Thyroid gland (tissue), 4 donors: ENCODE measurements at regions of chr2 and their contacts with region 1.

Region 1: GRCh38 chr2:212686285-212686895 is 147.8 kb upstream of the ERBB4 start:
- DNase-seq: peak; percentile 74 to 78
- H3K4me3 ChIP-seq: no peak overlapping the region
- H3K27ac ChIP-seq: peak overlapping the region in 1 of 3 donors; percentile 9
- H3K4me1 ChIP-seq: peaks cover 6 to 12% of the 10 kb centered on the region in 2 donors
- H3K27me3 ChIP-seq: no peaks in the 10 kb centered on the region
- CTCF ChIP-seq: peak; percentile 73 to 95 (median 90)
- POLR2A ChIP-seq: no peak

Region 2: GRCh38 chr2:212528106-212528856 is 158.1 kb before region 1 on chr2:
- intact Hi-C with region 1: no loop called
- DNase-seq: peak in 1 of 2 donors; percentile 1
- H3K4me3 ChIP-seq: no peak overlapping the region
- H3K27ac ChIP-seq: no peak overlapping the region
- H3K4me1 ChIP-seq: no peaks in the 10 kb centered on the region
- H3K27me3 ChIP-seq: no peaks in the 10 kb centered on the region
- CTCF ChIP-seq: peak in 2 of 6 experiments; percentile 13 to 20
- POLR2A ChIP-seq: no peak

Region 3: DNA sequence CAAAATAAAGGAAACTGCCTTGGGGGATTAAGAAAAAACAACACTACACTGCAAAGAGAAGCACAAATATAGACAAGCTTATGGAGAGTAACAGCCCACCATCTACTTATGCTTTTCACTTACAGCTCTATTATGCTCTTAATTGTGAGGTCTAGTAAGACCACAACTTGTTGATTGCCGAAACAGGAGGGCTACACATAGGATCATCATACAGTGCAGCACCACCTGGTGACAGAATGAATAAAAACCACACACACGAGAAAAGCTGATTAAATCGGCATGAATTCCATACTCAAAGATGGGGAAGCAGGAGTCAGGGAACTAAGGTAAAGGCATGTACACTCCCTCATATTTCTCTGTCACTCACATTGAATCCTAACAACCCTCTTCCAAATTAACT is 205.8 kb after region 1 on chr2:
- intact Hi-C with region 1: loop called (anchors 10 kb)
- DNase-seq: peak; percentile 27 to 29
- H3K4me3 ChIP-seq: no peak overlapping the region
- H3K27ac ChIP-seq: no peak overlapping the region
- H3K4me1 ChIP-seq: no peaks in the 10 kb centered on the region
- H3K27me3 ChIP-seq: no peaks in the 10 kb centered on the region
- CTCF ChIP-seq: peak in 4 of 6 experiments; percentile 49 to 82 (median 60)
- POLR2A ChIP-seq: no peak

Region 4: GRCh38 chr2:212974692-212975091 is 288.3 kb after region 1 on chr2:
- intact Hi-C with region 1: no loop called
- DNase-seq: no peak
- H3K4me3 ChIP-seq: no peak overlapping the region
- H3K27ac ChIP-seq: no peak overlapping the region
- H3K4me1 ChIP-seq: peaks cover 0 to 10% of the 10 kb centered on the region in 2 donors
- H3K27me3 ChIP-seq: no peaks in the 10 kb centered on the region
- CTCF ChIP-seq: no peak
- POLR2A ChIP-seq: no peak

Region 5: GRCh38 chr2:213149294-213149875 is 463.0 kb after region 1 on chr2:
- intact Hi-C with region 1: loop called (anchors 10 kb)
- DNase-seq: no peak
- H3K4me3 ChIP-seq: peak overlapping the region in 2 of 3 donors; percentile 44 to 62
- H3K27ac ChIP-seq: peak overlapping the region; percentile 82 to 86 (median 83)
- H3K4me1 ChIP-seq: peaks cover 11 to 29% of the 10 kb centered on the region in 2 donors
- H3K27me3 ChIP-seq: no peaks in the 10 kb centered on the region
- CTCF ChIP-seq: peak in 2 of 6 experiments; percentile 23 to 24
- POLR2A ChIP-seq: no peak